Endothelial cell of umbilical vein (primary cell): ENCODE measurements at regions of chr17 and their contacts with region 1.

Region 1: GRCh38 chr17:60065136-60065535 is 13.6 kb downstream of the HEATR6 start:
- DNase-seq: peak; percentile 10
- H3K4me3 ChIP-seq: no peak overlapping the region
- H3K27ac ChIP-seq: peak overlapping the region; percentile 15
- H3K4me1 ChIP-seq: peaks cover 21% of the 10 kb centered on the region
- H3K27me3 ChIP-seq: no peaks in the 10 kb centered on the region
- CTCF ChIP-seq: no peak
- POLR2A ChIP-seq: no peak

Region 2: GRCh38 chr17:59778996-59779395 is 286.1 kb before region 1 on chr17:
- CTCF ChIA-PET with region 1: no interaction called
- POLR2A ChIA-PET with region 1: no interaction called
- dilution Hi-C with region 1: no loop called
- intact Hi-C with region 1: no loop called
- DNase-seq: no peak
- H3K4me3 ChIP-seq: no peak overlapping the region
- H3K27ac ChIP-seq: no peak overlapping the region
- H3K4me1 ChIP-seq: peaks cover 19% of the 10 kb centered on the region
- H3K27me3 ChIP-seq: no peaks in the 10 kb centered on the region
- CTCF ChIP-seq: no peak
- POLR2A ChIP-seq: no peak

Region 3: GRCh38 chr17:60077672-60078519 is 12.8 kb after region 1 on chr17:
- CTCF ChIA-PET with region 1: interaction called, 15 read pairs
- POLR2A ChIA-PET with region 1: no interaction called
- dilution Hi-C with region 1: no loop called
- intact Hi-C with region 1: no loop called
- DNase-seq: no peak
- H3K4me3 ChIP-seq: peak overlapping the region; percentile 75 to 98 (median 90)
- H3K27ac ChIP-seq: no peak overlapping the region
- H3K4me1 ChIP-seq: peaks cover 14% of the 10 kb centered on the region
- H3K27me3 ChIP-seq: no peaks in the 10 kb centered on the region
- CTCF ChIP-seq: no peak
- POLR2A ChIP-seq: no peak

Region 4: DNA sequence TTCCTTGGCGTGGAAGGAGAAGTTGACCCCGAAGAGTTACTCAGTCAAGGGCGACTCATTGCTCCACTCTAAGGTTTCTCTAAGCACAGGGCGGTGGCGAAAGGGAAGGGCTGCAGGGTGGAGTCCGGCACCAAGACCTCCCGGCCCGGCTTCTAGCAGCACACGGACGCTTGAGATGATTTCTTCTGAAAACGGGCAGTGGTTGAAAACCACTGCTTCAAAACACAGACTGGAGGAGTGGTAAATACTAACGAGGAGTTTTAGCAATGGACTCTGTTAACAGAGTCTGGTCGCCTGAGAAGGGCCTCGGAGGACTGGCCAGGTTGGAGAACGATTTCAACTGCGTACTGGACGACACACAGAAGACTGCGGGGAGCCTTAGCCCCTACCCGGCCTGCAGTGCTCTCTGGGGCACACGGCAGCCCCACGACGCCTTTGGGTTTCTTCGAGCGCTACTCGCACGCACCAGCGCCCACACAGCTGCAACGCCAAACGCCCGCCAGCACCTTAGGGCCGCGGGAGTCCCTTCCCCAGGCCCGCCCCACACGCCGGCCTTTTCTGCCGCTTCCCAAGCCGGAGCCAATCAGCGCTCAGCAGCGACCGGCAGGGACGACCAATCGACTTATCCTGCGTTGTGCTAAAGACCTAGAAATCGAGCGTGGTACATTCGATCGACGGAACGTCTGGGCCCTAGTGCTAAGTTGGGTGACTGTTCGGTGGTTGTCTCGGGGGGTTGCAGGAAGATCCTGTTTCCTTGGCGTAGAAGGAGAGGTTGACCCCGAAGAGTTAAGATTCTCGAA is 70.2 kb after region 1 on chr17:
- CTCF ChIA-PET with region 1: no interaction called
- POLR2A ChIA-PET with region 1: no interaction called
- dilution Hi-C with region 1: no loop called
- intact Hi-C with region 1: no loop called
- DNase-seq: peak; percentile 92
- H3K4me3 ChIP-seq: peak overlapping the region; percentile 52 to 83 (median 59)
- H3K27ac ChIP-seq: peak overlapping the region; percentile 50
- H3K4me1 ChIP-seq: peaks cover 4% of the 10 kb centered on the region
- H3K27me3 ChIP-seq: peaks cover 24% of the 10 kb centered on the region in 2 experiments
- CTCF ChIP-seq: no peak
- POLR2A ChIP-seq: peak; percentile 74

Region 5: GRCh38 chr17:60161674-60162546 is 96.8 kb after region 1 on chr17:
- CTCF ChIA-PET with region 1: no interaction called
- POLR2A ChIA-PET with region 1: no interaction called
- dilution Hi-C with region 1: no loop called
- intact Hi-C with region 1: no loop called
- DNase-seq: peak; percentile 43
- H3K4me3 ChIP-seq: no peak overlapping the region
- H3K27ac ChIP-seq: no peak overlapping the region
- H3K4me1 ChIP-seq: peaks cover 3% of the 10 kb centered on the region
- H3K27me3 ChIP-seq: no peaks in the 10 kb centered on the region
- CTCF ChIP-seq: no peak
- POLR2A ChIP-seq: no peak